ENCODE measurements at regions of chr2 and their contacts with region 1.

Region 1: DNA sequence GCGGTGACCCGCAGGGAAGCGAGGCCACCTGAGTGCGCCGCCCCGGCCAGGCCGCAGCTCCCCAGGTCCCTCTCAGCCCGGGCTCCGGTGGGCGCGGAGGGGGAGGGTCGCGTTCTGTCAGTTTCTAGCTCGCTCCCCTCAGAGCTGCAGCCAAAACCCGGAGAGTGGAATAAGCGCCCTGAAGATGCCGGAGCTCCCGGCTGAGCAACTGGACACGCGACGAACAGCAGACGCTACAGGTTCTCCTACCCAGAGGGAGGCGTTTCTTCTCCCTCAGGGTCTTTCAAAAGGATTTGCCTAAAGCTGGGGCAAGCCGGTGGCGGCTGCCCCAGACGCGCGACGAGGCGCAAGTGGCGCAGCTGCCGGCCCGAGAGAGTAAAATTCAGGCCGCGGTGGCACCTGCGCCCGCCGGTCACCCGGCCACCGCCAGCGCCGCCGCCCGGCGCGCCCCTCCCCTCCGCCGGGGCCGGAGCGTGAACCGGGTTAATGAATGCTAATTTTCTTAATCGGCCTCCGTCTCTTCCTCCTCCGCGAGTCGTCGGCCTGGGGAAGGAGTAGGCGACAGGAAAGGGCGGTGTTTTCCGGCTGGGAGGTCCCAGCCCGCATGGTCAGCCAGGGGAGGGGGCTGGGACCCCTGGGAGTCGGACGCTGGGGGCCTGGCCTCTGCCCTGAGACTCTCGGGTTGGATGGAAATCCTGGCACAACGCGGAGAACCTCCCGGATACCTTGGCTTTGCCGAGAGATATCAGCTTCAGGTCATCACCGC is 845 bp upstream of the CDC42EP3 start:
- DNase-seq: peak; percentile 91 to 94
- ATAC-seq: peak; percentile 67 to 72
- H3K4me3 ChIP-seq: peak overlapping the region; percentile 75
- H3K27ac ChIP-seq: peak overlapping the region; percentile 92 to 98
- H3K4me1 ChIP-seq: peaks cover 57% of the 10 kb centered on the region
- CTCF ChIP-seq: no peak
- EP300 ChIP-seq: no peak
- POLR2A ChIP-seq: no peak; the same call in 1 of the 2 replicates
- RAD21 ChIP-seq: peak; percentile 17 to 32; a peak in 1 of 5 replicates

Region 2: DNA sequence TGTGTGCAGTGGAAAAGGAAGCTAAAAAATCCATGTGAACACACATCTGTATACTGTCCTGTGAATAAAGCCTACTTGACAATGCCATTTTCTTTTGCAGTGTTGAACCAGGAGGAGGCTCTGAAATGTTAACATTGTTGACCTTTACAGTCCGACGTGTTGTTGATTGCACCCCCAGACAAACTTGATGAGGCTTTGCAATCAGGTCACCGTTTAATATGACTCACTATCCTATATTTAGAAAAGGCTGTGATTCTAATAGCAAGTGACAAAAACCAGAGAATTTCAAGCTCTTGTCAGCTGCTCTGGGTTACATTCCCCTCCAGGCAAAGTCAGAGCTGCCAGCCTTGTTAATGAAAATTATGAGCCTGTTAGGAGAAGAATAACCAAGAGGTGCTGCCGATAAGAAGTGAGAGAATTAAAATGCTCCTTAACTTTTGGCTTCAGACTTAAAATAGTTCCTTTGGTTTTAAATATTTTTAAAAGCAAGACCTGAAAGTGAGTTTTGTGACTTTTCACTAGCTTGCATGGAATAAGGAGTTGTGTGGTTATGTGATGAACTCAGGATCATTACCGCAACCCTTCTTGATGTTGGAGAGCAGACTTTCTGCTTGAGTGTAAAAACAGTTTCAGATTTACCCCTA is 165.8 kb before region 1 on chr2:
- CTCF ChIA-PET with region 1: no interaction called
- POLR2A ChIA-PET with region 1: no interaction called
- DNase-seq: no peak
- ATAC-seq: no peak
- H3K4me3 ChIP-seq: no peak overlapping the region
- H3K27ac ChIP-seq: no peak overlapping the region
- H3K4me1 ChIP-seq: no peaks in the 10 kb centered on the region
- CTCF ChIP-seq: no peak
- EP300 ChIP-seq: no peak
- POLR2A ChIP-seq: no peak
- RAD21 ChIP-seq: no peak

Region 3: GRCh38 chr2:37654932-37655331 is 17.4 kb before region 1 on chr2:
- CTCF ChIA-PET with region 1: interaction called, 13 read pairs
- POLR2A ChIA-PET with region 1: interaction called, 6 read pairs
- DNase-seq: no peak
- ATAC-seq: no peak
- H3K4me3 ChIP-seq: no peak overlapping the region
- H3K27ac ChIP-seq: peak overlapping the region; percentile 11 to 85; a peak in 4 of 6 replicates
- H3K4me1 ChIP-seq: peaks cover 94% of the 10 kb centered on the region
- CTCF ChIP-seq: no peak
- EP300 ChIP-seq: no peak
- POLR2A ChIP-seq: no peak
- RAD21 ChIP-seq: no peak

Region 4: GRCh38 chr2:37767956-37768925 is 96.0 kb after region 1 on chr2:
- CTCF ChIA-PET with region 1: interaction called, 5 read pairs
- POLR2A ChIA-PET with region 1: interaction called, 15 read pairs
- DNase-seq: peak; percentile 53 to 87
- ATAC-seq: peak; percentile 80 to 95
- H3K4me3 ChIP-seq: no peak overlapping the region
- H3K27ac ChIP-seq: peak overlapping the region; percentile 86 to 92
- H3K4me1 ChIP-seq: peaks cover 71% of the 10 kb centered on the region
- CTCF ChIP-seq: no peak
- EP300 ChIP-seq: peak; percentile 72 to 88; a peak in 4 of 5 replicates
- POLR2A ChIP-seq: no peak
- RAD21 ChIP-seq: peak; percentile 40 to 66

Region 5: GRCh38 chr2:38264396-38265281 is 592.4 kb after region 1 on chr2:
- CTCF ChIA-PET with region 1: no interaction called
- POLR2A ChIA-PET with region 1: no interaction called
- DNase-seq: no peak
- ATAC-seq: no peak
- H3K4me3 ChIP-seq: no peak overlapping the region
- H3K27ac ChIP-seq: no peak overlapping the region
- H3K4me1 ChIP-seq: no peaks in the 10 kb centered on the region
- CTCF ChIP-seq: no peak
- EP300 ChIP-seq: no peak
- POLR2A ChIP-seq: no peak
- RAD21 ChIP-seq: no peak